ENCODE measurements at regions of chr20 and their contacts with region 1.

Region 1: DNA sequence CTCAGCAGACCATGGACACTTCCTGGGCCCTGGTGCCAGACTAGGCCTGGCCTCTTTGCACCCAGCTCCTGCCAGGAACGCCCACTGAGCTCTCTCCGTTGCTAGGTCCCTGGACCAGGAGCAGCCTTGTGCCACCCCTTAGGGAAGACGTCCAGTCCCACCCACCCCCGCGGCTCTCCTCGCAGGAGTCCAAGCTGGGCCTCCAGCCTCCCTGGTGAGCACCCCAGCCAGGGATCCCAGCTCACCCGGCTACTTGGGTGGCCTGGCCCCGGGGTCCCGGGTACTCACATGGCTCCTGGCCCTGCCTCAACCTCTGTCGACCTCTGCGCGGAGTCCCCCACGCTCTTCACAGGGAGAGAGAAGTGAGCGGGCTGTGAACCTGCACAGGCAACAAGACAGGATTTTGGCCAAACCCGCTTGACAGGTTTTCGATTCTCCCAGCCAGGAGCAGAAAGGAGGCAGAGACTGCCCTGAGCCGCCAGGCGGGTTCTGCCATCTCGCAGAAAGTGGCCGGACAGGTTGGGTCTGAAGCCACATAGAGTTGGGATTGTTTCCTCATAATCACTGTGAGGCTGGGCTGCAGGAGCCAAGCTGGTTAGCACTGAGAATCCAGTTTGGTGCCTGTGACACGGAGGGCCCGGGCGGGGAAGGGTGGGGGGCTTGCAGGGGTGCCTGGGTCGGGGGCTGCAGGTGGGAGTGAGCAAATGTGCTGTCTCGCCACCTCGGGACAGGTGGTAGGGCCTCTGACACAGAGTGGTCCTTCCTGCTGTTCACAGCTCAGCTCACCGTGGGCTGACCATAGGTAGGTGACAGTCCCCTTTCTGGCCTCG is at the start of gene RBBP8NL:
- DNase-seq: no peak
- H3K4me3 ChIP-seq: no peak within 1 kb of the TSS
- H3K27ac ChIP-seq: no peak within 1 kb of the TSS
- H3K27me3 ChIP-seq: peaks cover 2% of the 10 kb centered on the region
- CTCF ChIP-seq: no peak

Region 2: DNA sequence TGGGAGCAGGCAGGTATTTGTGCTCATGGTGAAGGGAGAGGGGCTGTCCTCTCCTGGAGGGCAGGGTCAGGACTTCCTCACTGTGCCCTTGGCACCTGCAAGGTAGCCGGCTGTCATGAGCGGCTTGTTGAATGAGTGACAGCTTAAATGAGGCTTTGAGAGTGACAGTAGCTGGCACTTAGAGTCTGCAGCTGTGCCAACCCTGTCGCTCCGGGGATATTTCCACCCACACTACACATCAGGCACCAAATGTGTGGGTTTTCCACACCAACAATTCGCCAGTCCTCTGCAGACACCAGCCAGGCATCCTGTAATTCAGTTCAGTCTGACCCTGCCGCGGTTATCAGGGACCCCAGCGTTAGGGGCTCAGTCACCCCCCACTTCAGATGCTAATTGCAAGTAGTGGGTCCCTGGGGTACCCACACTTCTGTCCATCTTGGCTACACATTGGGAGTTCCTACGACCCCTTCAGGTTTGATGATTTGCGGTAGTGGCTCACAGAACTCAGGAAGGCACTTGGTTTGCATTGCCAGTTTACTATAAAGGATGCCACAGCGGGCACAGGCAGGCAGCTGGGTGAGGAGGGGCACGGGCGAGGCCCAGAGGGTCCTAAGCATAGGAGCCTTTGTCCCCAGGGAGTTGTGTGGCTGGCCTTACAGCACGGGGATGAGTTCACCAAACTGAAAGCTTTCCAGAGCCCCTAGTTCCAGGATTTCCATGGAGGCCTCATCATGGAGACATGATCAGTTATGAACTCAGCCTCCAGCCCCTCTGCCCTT is 235.4 kb before region 1 on chr20:
- in situ Hi-C with region 1: no loop called
- DNase-seq: no peak
- H3K4me3 ChIP-seq: no peak overlapping the region
- H3K27ac ChIP-seq: no peak overlapping the region
- H3K27me3 ChIP-seq: no peaks in the 10 kb centered on the region
- CTCF ChIP-seq: no peak

Region 3: GRCh38 chr20:62285722-62286121 is 141.7 kb before region 1 on chr20:
- in situ Hi-C with region 1: no loop called
- DNase-seq: no peak
- H3K4me3 ChIP-seq: no peak overlapping the region
- H3K27ac ChIP-seq: no peak overlapping the region
- H3K27me3 ChIP-seq: no peaks in the 10 kb centered on the region
- CTCF ChIP-seq: no peak

Region 4: GRCh38 chr20:62536871-62537401 is 109.5 kb after region 1 on chr20:
- in situ Hi-C with region 1: loop called (anchors 25 kb)
- DNase-seq: no peak
- H3K4me3 ChIP-seq: no peak overlapping the region
- H3K27ac ChIP-seq: no peak overlapping the region
- H3K27me3 ChIP-seq: no peaks in the 10 kb centered on the region
- CTCF ChIP-seq: no peak

Region 5: GRCh38 chr20:63025534-63026331 is 598.3 kb after region 1 on chr20:
- in situ Hi-C with region 1: no loop called
- DNase-seq: peak; percentile 16
- H3K4me3 ChIP-seq: no peak overlapping the region
- H3K27ac ChIP-seq: no peak overlapping the region
- H3K27me3 ChIP-seq: peaks cover 74% of the 10 kb centered on the region
- CTCF ChIP-seq: no peak